ENCODE measurements at regions of chr3 and their contacts with region 1.

Region 1: GRCh38 chr3:177197041-177197727 is at the start of gene TBL1XR1:
- DNase-seq: peak; percentile 78 to 95 (median 86)
- ATAC-seq: peak; percentile 48
- H3K4me3 ChIP-seq: peak within 1 kb of the TSS; percentile 86 to 93
- H3K4me3 Mint-ChIP-seq: peak within 1 kb of the TSS; percentile 99
- H3K27ac ChIP-seq: peak within 1 kb of the TSS; percentile 81 to 85
- H3K27ac Mint-ChIP-seq: peak within 1 kb of the TSS; percentile 99
- H3K4me1 ChIP-seq: peaks cover 56% of the 10 kb centered on the region
- H3K4me1 Mint-ChIP-seq: peaks cover 65% of the 10 kb centered on the region
- H3K27me3 ChIP-seq: no peaks in the 10 kb centered on the region
- H3K27me3 Mint-ChIP-seq: no peaks in the 10 kb centered on the region
- CTCF ChIP-seq: no peak
- total RNA-seq, gene TBL1XR1: 64.8 to 68.4 TPM

Region 2: GRCh38 chr3:177050501-177051237 is 146.5 kb before region 1 on chr3:
- CTCF ChIA-PET with region 1: interaction called, 20 read pairs
- POLR2A ChIA-PET with region 1: interaction called, 4 read pairs
- intact Hi-C with region 1: loop called in 1 of 2 experiments (anchors 1 kb)
- DNase-seq: peak in 2 of 9 experiments; percentile 64 to 75
- ATAC-seq: peak; percentile 86
- H3K4me3 ChIP-seq: no peak overlapping the region
- H3K4me3 Mint-ChIP-seq: no peak overlapping the region
- H3K27ac ChIP-seq: no peak overlapping the region
- H3K27ac Mint-ChIP-seq: no peak overlapping the region
- H3K4me1 ChIP-seq: peaks cover 3% of the 10 kb centered on the region
- H3K4me1 Mint-ChIP-seq: peaks cover 20% of the 10 kb centered on the region
- H3K27me3 ChIP-seq: no peaks in the 10 kb centered on the region
- H3K27me3 Mint-ChIP-seq: no peaks in the 10 kb centered on the region
- CTCF ChIP-seq: peak; percentile 95

Region 3: GRCh38 chr3:177124882-177125281 is 72.3 kb before region 1 on chr3:
- CTCF ChIA-PET with region 1: no interaction called
- POLR2A ChIA-PET with region 1: interaction called, 3 read pairs
- intact Hi-C with region 1: loop called in 1 of 2 experiments (anchors 5 kb)
- DNase-seq: no peak
- ATAC-seq: no peak
- H3K4me3 ChIP-seq: no peak overlapping the region
- H3K4me3 Mint-ChIP-seq: no peak overlapping the region
- H3K27ac ChIP-seq: no peak overlapping the region
- H3K27ac Mint-ChIP-seq: peak overlapping the region; percentile 13
- H3K4me1 ChIP-seq: peaks cover 13% of the 10 kb centered on the region
- H3K4me1 Mint-ChIP-seq: peaks cover 88% of the 10 kb centered on the region
- H3K27me3 ChIP-seq: no peaks in the 10 kb centered on the region
- H3K27me3 Mint-ChIP-seq: no peaks in the 10 kb centered on the region
- CTCF ChIP-seq: no peak

Region 4: DNA sequence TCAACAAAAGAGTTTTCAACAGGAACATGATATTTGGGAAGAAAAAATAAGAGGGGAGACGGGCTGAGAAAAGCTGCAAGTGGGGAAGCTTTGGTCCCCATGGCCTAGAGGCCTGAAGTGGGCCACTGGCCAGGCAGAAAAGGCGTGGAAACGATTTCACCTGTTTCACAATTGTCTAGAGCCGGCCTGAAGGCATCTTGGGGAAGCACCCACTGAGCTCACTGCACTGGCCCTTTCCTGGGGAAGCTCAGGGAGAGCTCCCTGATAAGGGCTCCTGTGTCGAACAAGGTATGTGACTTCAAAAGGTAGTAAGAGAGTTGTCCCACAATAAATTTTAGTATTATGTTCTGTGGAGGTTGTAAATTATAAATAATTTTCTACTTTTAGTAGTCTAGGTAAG is 18.1 kb after region 1 on chr3:
- CTCF ChIA-PET with region 1: no interaction called
- POLR2A ChIA-PET with region 1: no interaction called
- intact Hi-C with region 1: no loop called
- DNase-seq: no peak
- ATAC-seq: no peak
- H3K4me3 ChIP-seq: no peak overlapping the region
- H3K4me3 Mint-ChIP-seq: no peak overlapping the region
- H3K27ac ChIP-seq: no peak overlapping the region
- H3K27ac Mint-ChIP-seq: no peak overlapping the region
- H3K4me1 ChIP-seq: peaks cover 3% of the 10 kb centered on the region
- H3K4me1 Mint-ChIP-seq: peaks cover 11% of the 10 kb centered on the region
- H3K27me3 ChIP-seq: no peaks in the 10 kb centered on the region
- H3K27me3 Mint-ChIP-seq: no peaks in the 10 kb centered on the region
- CTCF ChIP-seq: no peak

Region 5: GRCh38 chr3:177236704-177237103 is 39.5 kb after region 1 on chr3:
- CTCF ChIA-PET with region 1: no interaction called
- POLR2A ChIA-PET with region 1: no interaction called
- intact Hi-C with region 1: loop called (anchors 1 to 5 kb)
- DNase-seq: no peak
- ATAC-seq: no peak
- H3K4me3 ChIP-seq: no peak overlapping the region
- H3K4me3 Mint-ChIP-seq: no peak overlapping the region
- H3K27ac ChIP-seq: no peak overlapping the region
- H3K27ac Mint-ChIP-seq: no peak overlapping the region
- H3K4me1 ChIP-seq: no peaks in the 10 kb centered on the region
- H3K4me1 Mint-ChIP-seq: peaks cover 6% of the 10 kb centered on the region
- H3K27me3 ChIP-seq: no peaks in the 10 kb centered on the region
- H3K27me3 Mint-ChIP-seq: no peaks in the 10 kb centered on the region
- CTCF ChIP-seq: no peak

Region 6: DNA sequence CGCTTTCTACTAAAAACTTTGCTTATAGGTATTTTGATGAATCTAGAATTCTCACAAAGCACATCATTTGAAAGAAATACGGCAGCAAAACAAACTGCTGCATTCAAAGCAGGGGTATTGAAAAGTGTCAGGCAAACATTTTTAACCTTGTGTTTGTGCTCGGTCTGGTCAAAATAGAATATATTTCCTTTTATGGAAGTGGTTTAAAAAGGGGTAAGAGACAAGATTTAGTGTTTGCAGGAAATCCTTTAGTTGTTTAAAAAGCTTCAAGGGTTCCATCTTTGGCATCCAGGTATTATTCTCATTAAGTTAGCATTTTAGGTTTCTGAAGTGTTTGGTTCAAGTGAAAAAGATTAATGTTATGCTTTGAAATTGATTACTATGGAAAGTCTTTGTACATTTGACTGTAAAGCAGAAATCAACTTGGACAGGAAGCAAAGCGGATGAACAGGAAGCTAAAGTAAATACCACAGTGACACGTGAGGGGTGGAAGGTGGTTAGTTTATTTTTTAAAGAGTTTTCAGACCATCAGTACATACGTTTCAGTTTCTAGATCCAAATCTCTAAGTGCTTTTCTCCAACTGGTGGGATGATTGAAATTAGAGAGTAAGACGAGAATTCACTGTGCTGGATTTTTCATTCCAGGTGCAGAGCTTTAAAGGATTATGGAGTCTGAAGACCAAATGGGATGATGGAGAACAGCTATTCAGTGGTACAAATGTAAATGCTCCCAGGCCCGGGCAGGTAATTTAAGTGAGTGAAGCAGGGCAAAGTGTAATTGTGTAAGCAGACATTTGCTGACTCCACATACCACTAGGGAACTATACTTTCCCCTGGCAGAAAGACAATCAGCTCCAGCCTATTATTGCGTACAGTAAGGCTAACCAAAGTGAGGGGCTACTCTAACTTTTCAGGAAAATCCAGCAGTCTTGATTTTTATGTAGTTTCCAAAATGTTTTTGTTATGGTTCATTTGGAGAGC is 341.9 kb after region 1 on chr3:
- CTCF ChIA-PET with region 1: interaction called, 3 read pairs
- POLR2A ChIA-PET with region 1: interaction called, 3 read pairs
- intact Hi-C with region 1: loop called in 1 of 2 experiments (anchors 10 kb)
- DNase-seq: peak in 3 of 9 experiments; percentile 9 to 67 (median 48)
- ATAC-seq: peak; percentile 49
- H3K4me3 ChIP-seq: peak overlapping the region; percentile 13 to 30
- H3K4me3 Mint-ChIP-seq: peak overlapping the region; percentile 75
- H3K27ac ChIP-seq: peak overlapping the region; percentile 29 to 62
- H3K27ac Mint-ChIP-seq: peak overlapping the region; percentile 86
- H3K4me1 ChIP-seq: peaks cover 28% of the 10 kb centered on the region
- H3K4me1 Mint-ChIP-seq: peaks cover 57% of the 10 kb centered on the region
- H3K27me3 ChIP-seq: no peaks in the 10 kb centered on the region
- H3K27me3 Mint-ChIP-seq: no peaks in the 10 kb centered on the region
- CTCF ChIP-seq: no peak

Region 7: GRCh38 chr3:178385280-178385952 is 1188.2 kb after region 1 on chr3:
- CTCF ChIA-PET with region 1: no interaction called
- POLR2A ChIA-PET with region 1: interaction called, 3 read pairs
- intact Hi-C with region 1: loop called in 1 of 2 experiments (anchors 10 kb)
- DNase-seq: peak in 3 of 9 experiments; percentile 16 to 51 (median 39)
- ATAC-seq: peak; percentile 40
- H3K4me3 ChIP-seq: no peak overlapping the region
- H3K4me3 Mint-ChIP-seq: no peak overlapping the region
- H3K27ac ChIP-seq: no peak overlapping the region
- H3K27ac Mint-ChIP-seq: no peak overlapping the region
- H3K4me1 ChIP-seq: no peaks in the 10 kb centered on the region
- H3K4me1 Mint-ChIP-seq: no peaks in the 10 kb centered on the region
- H3K27me3 ChIP-seq: no peaks in the 10 kb centered on the region
- H3K27me3 Mint-ChIP-seq: peaks cover under 1% of the 10 kb centered on the region
- CTCF ChIP-seq: peak; percentile 82

Measured in CD8-positive, alpha-beta T cell (primary cell).